ENCODE measurements at regions of chr16 and their contacts with region 1.

Region 1: DNA sequence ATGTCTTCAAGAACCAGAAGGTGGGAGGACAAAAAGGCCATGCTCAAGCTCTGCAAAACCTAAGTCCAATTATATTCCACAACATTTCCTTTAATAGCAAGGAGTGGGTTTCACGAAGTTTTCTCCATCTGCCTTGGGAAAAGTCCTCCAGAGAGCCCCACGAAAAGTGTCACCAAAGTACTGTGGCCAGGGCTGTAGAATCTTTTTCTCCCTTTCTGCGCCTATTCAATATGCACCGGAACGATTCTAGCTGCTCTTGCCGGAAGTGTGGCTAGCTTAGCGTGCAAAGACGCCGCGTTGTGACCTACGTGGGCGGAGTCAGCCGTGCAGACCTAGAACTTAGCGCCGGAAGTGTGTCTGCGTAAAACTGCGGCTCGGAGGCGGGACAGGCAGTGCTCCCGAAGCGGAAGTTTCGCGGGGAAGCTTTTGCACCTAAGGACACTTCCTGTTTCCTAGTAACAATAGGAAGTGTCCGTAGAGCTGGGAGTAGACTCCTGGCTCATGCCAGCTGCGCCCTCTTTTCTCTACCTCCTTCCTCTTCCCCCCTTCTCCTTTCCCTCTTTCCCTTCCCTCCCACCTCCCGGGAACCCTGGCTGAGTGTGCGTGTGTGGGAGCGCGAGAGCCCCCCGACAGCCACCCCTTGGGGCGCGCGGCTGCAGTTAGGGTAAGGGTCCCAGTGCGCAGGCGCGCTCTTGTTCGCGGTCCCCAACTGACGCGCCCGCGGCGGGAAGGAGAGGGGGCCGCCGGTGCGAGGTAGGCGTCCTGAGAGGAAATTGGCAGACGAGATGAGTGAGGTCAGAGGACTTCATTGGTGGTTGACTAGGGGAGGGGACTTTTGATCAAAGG is at the starts of genes ZNF646 and ZNF668:
- H3K4me3 ChIP-seq: peak within 1 kb of the TSS; percentile 93
- H3K27ac ChIP-seq: peak within 1 kb of the TSS; percentile 83
- H3K4me1 ChIP-seq: no peaks in the 10 kb centered on the region
- CTCF ChIP-seq: peak; percentile 63

Region 2: GRCh38 chr16:30984669-30985400 is 89.4 kb before region 1 on chr16 and contains the start of gene HSD3B7:
- CTCF ChIA-PET with region 1: interaction called, 12 read pairs
- POLR2A ChIA-PET with region 1: interaction called, 13 read pairs
- H3K4me3 ChIP-seq: no peak within 1 kb of the TSS
- H3K27ac ChIP-seq: no peak within 1 kb of the TSS
- H3K4me1 ChIP-seq: no peaks in the 10 kb centered on the region
- CTCF ChIP-seq: peak; percentile 93

Region 3: DNA sequence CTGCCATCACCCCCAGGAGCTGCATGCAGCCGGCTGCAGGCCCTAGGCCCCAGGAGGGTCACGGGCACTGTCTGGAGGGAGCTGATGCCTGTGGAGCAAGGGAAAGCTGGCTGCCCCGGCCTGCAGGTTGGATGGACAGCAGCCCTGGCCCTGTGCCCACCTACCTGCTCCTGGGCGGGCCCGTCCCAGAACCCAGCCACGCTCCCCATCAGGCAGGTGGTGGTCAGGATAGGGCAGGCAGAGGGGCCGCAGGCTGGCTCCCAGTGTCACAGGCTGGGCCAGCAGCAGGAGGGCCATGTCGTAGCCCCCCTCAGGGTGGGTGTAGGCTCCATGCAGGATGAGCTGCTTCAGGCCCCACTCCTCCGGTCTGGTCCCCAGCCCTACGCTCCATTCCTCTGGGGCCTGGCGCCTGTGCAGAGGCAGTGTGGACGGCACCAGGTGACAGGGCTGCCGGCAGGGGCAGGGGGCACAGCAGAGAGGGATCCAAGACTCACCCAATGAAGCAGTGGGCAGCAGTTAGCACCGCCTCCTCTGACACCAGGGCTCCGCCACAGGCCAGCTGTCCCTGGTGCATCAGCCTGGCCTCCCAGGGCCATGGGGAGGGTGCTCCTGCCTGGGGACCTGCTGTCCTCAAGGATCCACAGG is 10.5 kb after region 1 on chr16:
- CTCF ChIA-PET with region 1: interaction called, 4 read pairs
- POLR2A ChIA-PET with region 1: interaction called, 12 read pairs
- H3K4me3 ChIP-seq: no peak overlapping the region
- H3K27ac ChIP-seq: no peak overlapping the region
- H3K4me1 ChIP-seq: no peaks in the 10 kb centered on the region
- CTCF ChIP-seq: no peak

Region 4: GRCh38 chr16:31117391-31118197 is 43.4 kb after region 1 on chr16 and contains the start of gene KAT8:
- CTCF ChIA-PET with region 1: no interaction called
- POLR2A ChIA-PET with region 1: interaction called, 52 read pairs
- H3K4me3 ChIP-seq: peak within 1 kb of the TSS; percentile 75
- H3K27ac ChIP-seq: peak within 1 kb of the TSS; percentile 57
- H3K4me1 ChIP-seq: peaks cover 4% of the 10 kb centered on the region; the same call in 1 of the 2 replicates
- CTCF ChIP-seq: no peak

Region 5: GRCh38 chr16:31202414-31203375 is 128.5 kb after region 1 on chr16 and contains the start of gene PYCARD:
- CTCF ChIA-PET with region 1: no interaction called
- POLR2A ChIA-PET with region 1: no interaction called
- H3K4me3 ChIP-seq: no peak within 1 kb of the TSS
- H3K27ac ChIP-seq: no peak within 1 kb of the TSS
- H3K4me1 ChIP-seq: no peaks in the 10 kb centered on the region
- CTCF ChIP-seq: no peak

Region 6: DNA sequence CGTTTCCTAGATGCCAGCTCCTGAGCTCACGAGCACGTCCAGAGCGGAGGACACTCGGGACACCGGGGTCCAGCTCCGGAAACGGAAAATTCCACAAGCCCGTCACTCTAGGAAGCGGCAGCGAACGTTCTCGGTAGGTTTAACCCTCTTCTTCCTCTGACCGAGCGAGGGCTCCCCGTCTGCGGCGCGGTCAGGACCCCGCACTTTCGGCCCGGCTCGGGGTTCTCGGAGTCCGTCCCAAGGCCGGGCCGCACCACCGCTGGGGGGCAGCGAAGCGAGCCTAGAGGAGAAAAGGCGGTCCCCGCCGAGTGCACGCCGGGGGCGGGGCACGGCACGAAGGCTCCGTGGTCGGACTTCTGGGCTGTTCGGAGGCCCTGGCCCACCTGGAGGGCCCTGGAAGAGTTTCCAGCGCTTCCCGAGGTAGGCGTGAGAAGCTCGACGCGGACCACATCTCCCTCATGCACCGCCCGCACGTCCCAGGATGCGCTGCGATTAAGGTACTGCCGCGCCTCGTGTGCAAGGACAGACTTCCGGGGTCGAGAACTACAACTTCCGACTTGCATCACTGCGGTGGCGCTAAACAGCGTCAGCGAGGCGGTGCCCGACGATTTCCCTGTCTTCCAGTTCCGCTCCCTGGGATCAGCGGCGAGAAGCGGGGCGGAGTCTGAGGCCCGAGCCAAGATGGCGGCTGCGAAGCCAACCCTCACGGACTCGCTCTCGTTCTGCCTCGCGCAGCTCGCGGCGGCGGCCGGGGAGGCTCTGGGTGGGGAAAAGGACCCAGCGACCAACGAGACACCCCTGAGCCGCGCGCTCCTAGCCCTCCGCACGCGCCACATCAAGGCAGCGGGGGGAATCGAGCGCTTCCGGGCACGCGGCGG is 384.9 kb after region 1 on chr16 and contains the start of gene ARMC5:
- CTCF ChIA-PET with region 1: no interaction called
- POLR2A ChIA-PET with region 1: interaction called, 10 read pairs
- H3K4me3 ChIP-seq: peak within 1 kb of the TSS; percentile 85
- H3K27ac ChIP-seq: peak within 1 kb of the TSS; percentile 83
- H3K4me1 ChIP-seq: peaks cover 5% of the 10 kb centered on the region
- CTCF ChIP-seq: peak; percentile 89